ENCODE measurements at regions of chr5 and their contacts with region 1.

Region 1: GRCh38 chr5:159451197-159452052 is 121.1 kb upstream of the IL12B start:
- DNase-seq: peak; percentile 76 to 90 (median 88)
- H3K4me3 ChIP-seq: no peak overlapping the region
- H3K27ac ChIP-seq: peak overlapping the region in 3 of 5 donors; percentile 76 to 79 (median 77)
- H3K4me1 ChIP-seq: peaks cover 5 to 13% of the 10 kb centered on the region in 2 donors
- H3K27me3 ChIP-seq: no peaks in the 10 kb centered on the region
- CTCF ChIP-seq: no peak
- POLR2A ChIP-seq: peak in 1 of 2 donors; percentile 47

Region 2: GRCh38 chr5:159504857-159505304 is 53.5 kb after region 1 on chr5:
- intact Hi-C with region 1: loop called in 1 of 2 experiments (anchors 5 kb)
- DNase-seq: peak; percentile 42 to 72 (median 56)
- H3K4me3 ChIP-seq: no peak overlapping the region
- H3K27ac ChIP-seq: peak overlapping the region; percentile 51 to 87 (median 66)
- H3K4me1 ChIP-seq: peaks cover 7 to 26% of the 10 kb centered on the region in 2 donors
- H3K27me3 ChIP-seq: no peaks in the 10 kb centered on the region
- CTCF ChIP-seq: no peak
- POLR2A ChIP-seq: no peak